PC-9 (cell line): ENCODE measurements at regions of chr17 and their contacts with region 1.

Region 1: GRCh38 chr17:36534840-36535668 is at the starts of genes MYO19 and PIGW:
- DNase-seq: peak; percentile 82 to 93
- H3K4me3 ChIP-seq: peak within 1 kb of the TSS; percentile 99
- H3K27ac ChIP-seq: peak within 1 kb of the TSS; percentile 91
- H3K4me1 ChIP-seq: peaks cover 15% of the 10 kb centered on the region; the same call in 1 of the 2 replicates
- H3K27me3 ChIP-seq: no peaks in the 10 kb centered on the region
- CTCF ChIP-seq: no peak
- total RNA-seq, gene MYO19: 110 and 115 TPM in 2 replicates
- total RNA-seq, gene PIGW: 6.3 and 8.0 TPM in 2 replicates

Region 2: GRCh38 chr17:36486204-36487194 is 48.6 kb before region 1 on chr17 and contains the start of gene ZNHIT3:
- CTCF ChIA-PET with region 1: no interaction called
- POLR2A ChIA-PET with region 1: interaction called, 5 read pairs
- intact Hi-C with region 1: loop called (anchors 2 kb)
- DNase-seq: peak; percentile 83 to 86
- H3K4me3 ChIP-seq: peak within 1 kb of the TSS; percentile 69
- H3K27ac ChIP-seq: 0 out of 2 replicates have a peak within 1 kb of the TSS, but pooled peaks have one; percentile 7
- H3K4me1 ChIP-seq: peaks cover 6% of the 10 kb centered on the region; the same call in 1 of the 2 replicates
- H3K27me3 ChIP-seq: peaks cover 9% of the 10 kb centered on the region; the same call in 1 of the 2 replicates
- CTCF ChIP-seq: no peak
- total RNA-seq, gene ZNHIT3: 32.1 and 35.5 TPM in 2 replicates

Region 3: DNA sequence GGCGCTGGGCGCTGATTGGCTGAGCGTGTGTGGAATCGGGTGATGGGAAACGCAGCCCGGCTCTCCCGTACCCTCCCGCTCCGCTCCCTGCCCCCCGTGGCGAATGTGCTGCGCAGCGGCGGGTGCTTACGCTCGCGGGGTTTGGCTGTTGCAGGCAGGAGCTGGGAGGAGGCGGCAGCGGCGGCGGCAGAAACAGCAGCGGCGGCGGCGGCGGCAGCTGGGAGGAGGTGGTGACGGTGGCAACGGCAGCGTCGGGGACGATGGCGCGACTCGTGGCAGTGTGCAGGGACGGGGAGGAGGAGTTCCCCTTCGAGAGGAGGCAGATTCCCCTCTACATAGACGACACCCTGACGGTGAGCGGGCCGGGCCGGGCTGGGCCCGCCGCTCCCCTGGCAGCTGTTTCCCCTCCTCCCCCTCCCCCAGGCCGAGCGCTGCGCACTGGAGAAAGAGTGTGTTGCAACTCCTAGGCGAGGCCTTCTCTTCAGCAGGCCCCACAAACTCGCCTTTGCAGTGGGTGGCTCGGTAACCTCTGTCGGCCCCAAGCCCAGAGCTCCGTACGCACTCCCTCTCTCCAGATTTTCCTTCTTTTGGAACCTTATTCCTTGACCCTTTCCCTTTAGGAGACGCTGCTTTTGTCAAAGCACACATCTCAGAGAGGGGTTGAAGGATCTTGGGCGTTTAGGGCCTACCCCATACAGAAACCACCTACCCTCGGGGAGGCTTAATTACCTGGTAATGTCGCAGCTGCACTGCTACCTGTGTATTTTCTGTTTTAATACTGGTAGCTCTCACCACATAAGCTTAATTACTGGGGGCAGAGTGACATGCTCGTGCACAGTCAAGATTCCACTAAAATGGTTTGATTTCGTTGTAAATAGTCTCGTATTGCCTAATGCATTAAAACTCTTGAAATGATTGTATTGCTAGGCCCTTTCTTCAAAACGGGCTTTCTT is 10.7 kb after region 1 on chr17:
- CTCF ChIA-PET with region 1: no interaction called
- POLR2A ChIA-PET with region 1: interaction called, 3 read pairs
- intact Hi-C with region 1: loop called (anchors 1 kb)
- DNase-seq: peak; percentile 93 to 97
- H3K4me3 ChIP-seq: peak overlapping the region; percentile 78
- H3K27ac ChIP-seq: peak overlapping the region; percentile 62
- H3K4me1 ChIP-seq: peaks cover 27% of the 10 kb centered on the region
- H3K27me3 ChIP-seq: no peaks in the 10 kb centered on the region
- CTCF ChIP-seq: no peak

Region 4: DNA sequence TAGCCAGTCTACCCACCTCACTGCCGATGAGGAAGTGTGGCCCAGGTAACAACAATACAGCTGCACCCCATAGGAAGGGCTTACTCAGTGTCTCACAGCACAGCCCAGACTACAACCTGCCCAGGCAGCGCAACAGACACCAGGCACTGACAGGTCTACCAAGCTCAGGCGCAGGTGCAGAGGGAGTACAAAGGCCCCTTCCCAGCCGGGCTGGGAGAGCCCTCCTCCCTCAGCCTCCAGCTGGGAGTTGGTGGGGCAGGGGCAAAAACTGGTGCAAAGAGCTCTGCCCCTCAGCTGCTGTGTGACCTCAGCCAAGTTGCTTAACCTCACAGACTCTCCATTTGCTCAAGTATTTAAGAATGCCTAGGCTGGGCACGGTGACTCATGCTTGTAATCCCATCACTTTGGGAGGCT is 289.6 kb after region 1 on chr17:
- CTCF ChIA-PET with region 1: no interaction called
- POLR2A ChIA-PET with region 1: no interaction called
- intact Hi-C with region 1: no loop called
- DNase-seq: no peak
- H3K4me3 ChIP-seq: no peak overlapping the region
- H3K27ac ChIP-seq: no peak overlapping the region
- H3K4me1 ChIP-seq: no peaks in the 10 kb centered on the region
- H3K27me3 ChIP-seq: peaks cover 8% of the 10 kb centered on the region; the same call in 1 of the 2 replicates
- CTCF ChIP-seq: no peak

Region 5: GRCh38 chr17:37116671-37117185 is 581.7 kb after region 1 on chr17:
- CTCF ChIA-PET with region 1: no interaction called
- POLR2A ChIA-PET with region 1: interaction called, 13 read pairs
- intact Hi-C with region 1: no loop called
- DNase-seq: no peak
- H3K4me3 ChIP-seq: no peak overlapping the region
- H3K27ac ChIP-seq: no peak overlapping the region
- H3K4me1 ChIP-seq: no peaks in the 10 kb centered on the region
- H3K27me3 ChIP-seq: no peaks in the 10 kb centered on the region
- CTCF ChIP-seq: no peak